Motor neuron (in vitro differentiated cells): ENCODE measurements at regions of chr3 and their contacts with region 1.

Region 1: DNA sequence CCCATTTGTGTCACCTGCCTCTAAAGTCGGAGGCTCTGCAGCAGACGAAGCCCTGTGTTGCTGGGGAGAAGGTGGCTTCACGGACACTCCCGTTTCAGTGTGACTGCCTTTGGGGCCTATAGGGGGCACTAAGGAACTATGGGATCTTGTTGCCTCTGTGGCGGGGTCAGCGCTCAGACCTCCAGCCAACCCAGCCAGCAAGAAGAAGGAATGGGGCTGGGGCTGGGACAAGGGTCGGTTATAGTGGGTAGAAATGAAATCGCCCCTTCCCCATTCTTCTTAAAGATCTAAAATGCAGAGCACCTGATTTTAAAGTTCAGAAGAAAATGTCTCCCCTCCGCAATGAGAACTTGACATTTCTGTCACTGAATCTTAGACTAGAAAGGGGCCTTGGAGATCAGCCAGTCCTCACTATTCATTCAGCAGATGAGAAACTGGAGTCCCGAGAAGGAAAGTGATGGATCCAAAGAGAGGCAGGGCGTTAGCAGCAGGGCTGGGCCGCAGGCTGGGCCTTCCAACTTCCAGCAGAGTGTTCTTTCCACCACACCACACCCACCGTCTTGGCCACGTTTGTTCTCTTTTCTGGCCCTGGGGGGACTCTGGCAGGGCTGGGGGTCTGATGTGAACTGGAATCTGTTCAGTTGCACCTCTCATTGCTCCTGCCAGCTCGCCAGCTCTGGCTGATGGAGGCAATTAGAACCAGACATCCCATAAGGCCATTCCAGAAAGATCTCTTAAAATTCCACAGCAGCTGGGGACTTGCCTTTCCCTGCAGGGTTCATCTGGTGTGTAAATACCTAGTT is 195.4 kb downstream of the OPA1 start:
- ATAC-seq: peak; percentile 87 to 98 (median 94)
- H3K4me3 ChIP-seq: no peak overlapping the region
- H3K27ac ChIP-seq: peak overlapping the region in 1 of 2 donors; percentile 16
- H3K4me1 ChIP-seq: peaks cover 36 to 40% of the 10 kb centered on the region in 2 donors

Region 2: DNA sequence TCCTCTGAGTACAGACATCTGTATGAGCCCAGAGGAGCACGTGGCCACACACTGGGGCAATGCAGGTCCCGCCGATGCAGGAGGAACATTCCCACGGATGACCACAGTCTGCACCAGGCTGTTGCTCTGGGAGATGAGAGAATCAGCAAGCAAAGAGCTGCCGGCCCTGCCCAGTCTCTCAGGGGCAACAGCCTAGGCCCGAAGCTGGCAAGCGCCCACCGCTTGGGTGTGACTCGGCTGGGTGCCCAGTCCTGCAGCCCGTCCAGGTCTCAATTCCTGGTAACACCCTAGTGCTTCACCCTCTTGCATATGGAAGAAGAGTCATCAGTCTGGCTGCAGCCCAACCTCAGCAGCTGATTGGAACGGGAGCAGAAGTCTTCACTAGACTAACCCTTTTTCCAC is 193.9 kb after region 1 on chr3:
- in situ Hi-C with region 1: loop called in 1 of 9 experiments (anchors 25 kb)
- ATAC-seq: peak in 6 of 8 experiments; percentile 64 to 92 (median 86)
- H3K4me3 ChIP-seq: no peak overlapping the region
- H3K27ac ChIP-seq: no peak overlapping the region
- H3K4me1 ChIP-seq: peaks cover 13 to 14% of the 10 kb centered on the region in 2 donors

Region 3: DNA sequence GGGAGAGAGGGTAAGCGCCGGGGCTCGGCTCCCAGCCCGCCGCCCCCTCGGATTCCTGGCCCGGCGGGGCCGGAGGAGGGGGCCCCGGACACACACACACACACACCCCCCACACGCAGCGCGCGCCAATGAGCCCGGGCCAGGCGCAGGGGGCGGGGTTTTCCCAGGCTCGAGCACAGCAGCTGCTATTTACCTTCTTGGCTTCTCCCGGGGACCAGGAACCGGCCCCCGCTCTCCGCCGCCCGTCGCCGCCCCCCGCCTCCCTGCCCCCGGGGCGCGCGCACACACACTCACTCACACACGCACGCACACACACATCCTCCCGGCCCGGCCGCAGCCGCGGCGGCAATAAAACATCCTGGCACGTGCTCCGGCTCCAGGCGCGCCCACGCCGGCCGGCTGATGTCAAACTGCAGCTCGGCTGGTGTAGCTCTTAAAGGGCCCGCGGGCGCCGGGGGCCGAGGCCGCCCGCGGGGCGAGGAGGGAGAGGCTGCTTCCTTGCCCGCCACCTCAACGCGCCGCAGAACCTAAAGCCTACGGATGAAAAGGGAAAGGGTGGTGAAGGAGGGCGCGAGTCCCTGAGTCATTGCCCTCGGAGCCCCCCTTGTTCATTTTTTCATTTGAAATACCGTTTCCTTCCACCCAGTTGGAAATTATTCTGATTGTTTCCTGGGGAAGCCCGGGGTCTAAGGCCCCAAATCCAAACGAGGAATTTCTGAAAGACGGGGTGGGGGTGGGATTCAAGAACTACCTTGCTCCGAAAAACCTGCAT is 346.6 kb after region 1 on chr3:
- in situ Hi-C with region 1: loop called in 5 of 9 experiments (anchors 10 to 25 kb)
- ATAC-seq: peak; percentile 32 to 79 (median 70)
- H3K4me3 ChIP-seq: peak overlapping the region; percentile 35 to 57 (median 50)
- H3K27ac ChIP-seq: peak overlapping the region; percentile 69 to 92
- H3K4me1 ChIP-seq: peaks cover 42 to 48% of the 10 kb centered on the region in 2 donors

Region 4: GRCh38 chr3:194323785-194324735 is 535.7 kb after region 1 on chr3:
- in situ Hi-C with region 1: loop called in 8 of 9 experiments (anchors 5 to 25 kb)
- ATAC-seq: peak; percentile 55 to 88 (median 82)
- H3K4me3 ChIP-seq: peak overlapping the region in 1 of 5 donors; percentile 1
- H3K27ac ChIP-seq: peak overlapping the region; percentile 57 to 67
- H3K4me1 ChIP-seq: peaks cover 27 to 62% of the 10 kb centered on the region in 2 donors

Region 5: GRCh38 chr3:194422188-194422587 is 633.8 kb after region 1 on chr3:
- in situ Hi-C with region 1: no loop called
- ATAC-seq: no peak
- H3K4me3 ChIP-seq: no peak overlapping the region
- H3K27ac ChIP-seq: no peak overlapping the region
- H3K4me1 ChIP-seq: no peaks in the 10 kb centered on the region